Gastrocnemius medialis (tissue), 4 donors: ENCODE measurements at regions of chr18 and their contacts with region 1.

Region 1: DNA sequence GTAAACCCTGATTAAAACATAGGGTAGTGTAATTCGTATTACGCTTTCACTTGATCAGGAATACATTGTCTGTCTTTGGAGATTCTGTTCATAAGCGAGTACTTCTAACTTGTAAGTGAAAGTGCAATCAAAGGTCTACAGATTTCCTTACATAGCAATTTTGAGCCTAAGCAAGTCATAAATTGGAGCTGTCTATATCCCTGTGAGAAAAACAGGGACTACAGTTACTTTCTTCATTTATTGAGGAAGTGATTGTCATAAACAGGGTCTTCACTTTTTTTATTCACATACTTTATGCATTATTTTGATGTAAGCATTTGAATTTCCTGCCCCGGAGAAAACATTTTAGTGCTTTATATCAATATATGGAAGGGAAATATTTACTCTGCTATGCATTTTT is 670.4 kb downstream of the CBLN2 start:
- DNase-seq: no peak
- ATAC-seq: no peak
- H3K4me3 ChIP-seq: no peak overlapping the region
- H3K27ac ChIP-seq: no peak overlapping the region
- H3K4me1 ChIP-seq: no peaks in the 10 kb centered on the region
- H3K27me3 ChIP-seq: no peaks in the 10 kb centered on the region
- CTCF ChIP-seq: no peak
- POLR2A ChIP-seq: no peak

Region 2: DNA sequence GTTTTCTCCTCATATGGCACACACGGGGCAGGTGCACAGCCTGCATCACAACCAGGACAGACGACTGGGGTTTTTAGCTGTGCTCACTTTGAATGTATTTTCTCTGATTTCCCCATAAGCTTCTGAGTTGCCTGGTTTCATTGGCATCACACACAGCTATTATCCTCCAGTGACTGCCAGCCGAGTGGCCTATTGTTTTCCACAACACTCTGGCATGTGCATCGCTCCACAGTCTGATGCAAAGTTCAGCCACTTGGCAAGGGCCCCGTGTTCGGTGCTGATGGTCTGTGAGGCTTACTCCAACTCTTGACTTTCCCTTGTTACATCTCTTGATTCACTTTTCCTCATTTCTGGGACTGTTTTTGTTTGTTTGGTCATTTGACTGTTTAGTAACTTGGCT is 77.3 kb after region 1 on chr18:
- in situ Hi-C with region 1: loop called in 1 of 4 experiments (anchors 25 kb)
- intact Hi-C with region 1: no loop called
- DNase-seq: no peak
- ATAC-seq: no peak
- H3K4me3 ChIP-seq: no peak overlapping the region
- H3K27ac ChIP-seq: no peak overlapping the region
- H3K4me1 ChIP-seq: no peaks in the 10 kb centered on the region
- H3K27me3 ChIP-seq: no peaks in the 10 kb centered on the region
- CTCF ChIP-seq: no peak
- POLR2A ChIP-seq: no peak